Activated T-helper 2 cell treated with anti-CD3 and anti-CD28 coated beads, Interferon-gamma antibody, Interleukin-2, Interleukin-4, amounts not matched to agents 10 μg/mL and 5 μg/mL and 100 μg/mL, durations not matched to agents 14 hours and 24 hours and 36 hours (primary cell): ENCODE measurements at regions of chr3 and their contacts with region 1.

Region 1: GRCh38 chr3:59759298-59760031 is 709.6 kb upstream of the CFAP20DC start:
- DNase-seq: no peak
- H3K4me3 Mint-ChIP-seq: no peak overlapping the region
- H3K27ac Mint-ChIP-seq: peak overlapping the region; percentile 9
- H3K4me1 Mint-ChIP-seq: peaks cover 71% of the 10 kb centered on the region
- H3K27me3 Mint-ChIP-seq: no peaks in the 10 kb centered on the region

Region 2: DNA sequence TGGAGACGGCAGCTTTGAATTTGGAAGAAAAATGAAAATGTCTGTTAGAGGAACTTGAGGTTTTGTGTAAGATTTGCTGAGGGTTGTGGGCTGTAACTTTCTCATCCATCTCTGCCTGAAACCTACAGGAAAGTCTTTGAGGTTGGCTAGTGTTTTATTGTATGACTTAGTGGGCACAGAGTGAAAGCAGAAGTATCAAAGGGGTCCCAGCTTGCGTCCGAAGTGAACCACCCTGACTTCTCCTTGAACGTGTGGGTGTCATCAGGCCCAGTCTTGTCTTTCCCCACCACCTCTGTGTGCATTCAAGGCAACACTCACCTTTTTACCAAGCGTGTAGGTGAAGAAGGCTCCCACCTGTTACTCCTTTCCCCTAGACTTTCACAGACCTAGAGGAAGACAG is 27.5 kb before region 1 on chr3:
- intact Hi-C with region 1: loop called (anchors 2 kb)
- DNase-seq: no peak
- H3K4me3 Mint-ChIP-seq: peak overlapping the region; percentile 31
- H3K27ac Mint-ChIP-seq: no peak overlapping the region
- H3K4me1 Mint-ChIP-seq: peaks cover 42% of the 10 kb centered on the region
- H3K27me3 Mint-ChIP-seq: no peaks in the 10 kb centered on the region

Region 3: DNA sequence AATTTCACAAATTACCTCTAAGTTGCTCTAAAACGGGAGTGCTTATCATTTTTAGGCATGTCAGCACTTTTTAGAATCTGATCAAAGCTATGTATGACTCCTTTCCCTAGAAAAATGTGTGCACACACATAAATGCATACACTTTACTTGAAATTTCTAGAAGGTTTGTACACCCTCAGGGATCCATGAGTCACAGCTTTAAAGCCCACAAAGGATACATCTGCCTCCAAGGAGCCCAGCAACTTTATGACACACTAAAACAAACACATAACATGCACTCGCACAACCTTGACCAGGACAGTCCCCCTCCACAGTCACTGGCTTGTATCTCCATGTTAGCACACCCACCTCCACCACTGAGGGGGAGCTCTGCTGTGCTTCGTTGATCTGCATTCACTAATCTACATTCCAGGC is 12.3 kb after region 1 on chr3:
- intact Hi-C with region 1: loop called (anchors 1 kb)
- DNase-seq: no peak
- H3K4me3 Mint-ChIP-seq: no peak overlapping the region
- H3K27ac Mint-ChIP-seq: no peak overlapping the region
- H3K4me1 Mint-ChIP-seq: peaks cover 50% of the 10 kb centered on the region
- H3K27me3 Mint-ChIP-seq: no peaks in the 10 kb centered on the region

Region 4: DNA sequence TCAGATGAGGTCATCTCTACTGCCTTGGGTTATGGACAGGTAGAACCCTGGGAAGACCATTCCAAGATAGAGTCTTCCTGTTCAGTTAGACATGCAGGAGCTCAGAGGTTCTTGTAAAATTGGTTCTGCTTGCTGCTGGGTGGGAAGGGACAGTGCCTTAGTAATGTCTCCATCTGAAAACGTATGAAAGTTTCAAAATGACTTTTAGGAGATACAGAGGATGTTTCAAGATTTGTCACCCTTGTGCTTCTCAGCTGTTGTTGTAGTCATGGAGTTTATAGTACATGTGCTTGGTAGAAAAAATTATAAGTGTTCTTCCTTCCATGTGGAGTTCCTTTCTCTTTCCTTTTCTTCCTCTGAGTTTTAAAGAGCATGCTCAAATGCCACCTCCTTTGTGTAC is 175.6 kb after region 1 on chr3:
- intact Hi-C with region 1: no loop called
- DNase-seq: no peak
- H3K4me3 Mint-ChIP-seq: no peak overlapping the region
- H3K27ac Mint-ChIP-seq: peak overlapping the region; percentile 69
- H3K4me1 Mint-ChIP-seq: peaks cover 38% of the 10 kb centered on the region
- H3K27me3 Mint-ChIP-seq: no peaks in the 10 kb centered on the region

Region 5: DNA sequence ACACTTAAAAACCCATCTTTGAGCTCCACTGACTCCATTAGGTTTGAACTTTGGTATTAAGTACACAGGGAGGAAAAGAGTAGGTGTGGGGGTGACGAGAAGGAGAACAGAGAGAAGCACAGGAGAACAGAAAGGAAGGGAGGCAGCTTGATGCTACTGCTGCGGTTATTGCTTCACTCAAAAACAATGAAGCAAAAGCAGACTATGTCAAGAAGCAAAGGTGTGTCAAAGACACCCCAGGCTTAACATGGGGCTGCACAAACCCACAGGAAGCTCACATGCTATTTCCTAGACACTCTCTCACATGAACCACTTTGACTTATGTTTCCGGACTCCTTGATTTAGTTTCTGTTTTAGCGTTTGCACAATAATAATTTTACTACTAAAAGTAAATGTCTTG is 251.3 kb after region 1 on chr3:
- intact Hi-C with region 1: no loop called
- DNase-seq: peak; percentile 72
- H3K4me3 Mint-ChIP-seq: peak overlapping the region; percentile 49
- H3K27ac Mint-ChIP-seq: peak overlapping the region; percentile 85
- H3K4me1 Mint-ChIP-seq: peaks cover 67% of the 10 kb centered on the region
- H3K27me3 Mint-ChIP-seq: no peaks in the 10 kb centered on the region